Cardiac septum (tissue), 1 donor: ENCODE measurements at regions of chr19 and their contacts with region 1.

Region 1: GRCh38 chr19:35775298-35776110 is at the start of gene ARHGAP33:
- DNase-seq: peak; percentile 99
- total RNA-seq, gene ARHGAP33: 8.8 TPM

Region 2: DNA sequence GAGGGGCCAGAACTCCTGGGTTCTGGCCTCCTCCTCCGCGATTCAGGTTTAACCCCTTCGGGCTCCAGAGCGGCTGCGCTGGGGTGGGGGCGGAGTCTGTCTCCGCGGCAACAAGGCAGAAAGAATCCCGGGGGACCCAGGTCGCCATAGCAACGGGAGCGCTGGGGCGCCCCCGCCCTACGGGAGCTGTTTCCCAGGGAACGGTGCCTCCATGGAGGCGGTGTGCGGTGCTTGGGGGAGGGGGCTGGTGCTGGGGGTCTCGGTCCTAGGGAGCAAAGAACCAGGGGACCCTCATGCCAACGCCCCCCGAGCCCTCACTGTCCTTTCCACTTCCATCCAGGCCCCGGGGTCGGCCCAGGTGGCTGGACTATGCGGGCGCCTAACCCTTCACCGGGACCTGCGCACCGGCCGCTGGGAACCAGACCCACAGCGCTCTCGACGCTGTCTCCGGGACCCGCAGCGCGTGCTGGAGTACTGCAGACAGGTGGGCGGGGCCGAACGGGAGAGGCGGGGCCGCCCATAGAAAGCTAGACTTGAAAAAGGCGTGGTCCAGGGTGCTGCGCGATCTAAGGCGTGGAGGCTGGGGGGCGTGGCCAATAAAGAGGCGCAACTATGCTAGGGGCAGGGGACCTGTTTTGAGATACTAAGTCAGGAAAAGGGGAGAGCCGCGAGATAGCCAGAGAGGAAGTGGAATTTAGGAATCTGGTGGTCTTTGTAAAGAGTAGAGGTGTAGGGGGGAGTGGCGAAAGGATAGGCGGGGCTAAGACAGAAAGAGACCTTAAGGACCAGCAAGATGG is 94.0 kb after region 1 on chr19:
- intact Hi-C with region 1: loop called (anchors 10 kb)
- DNase-seq: no peak

Region 3: GRCh38 chr19:35935911-35936737 is 160.6 kb after region 1 on chr19 and contains the start of gene LRFN3:
- intact Hi-C with region 1: no loop called
- DNase-seq: peak; percentile 82
- total RNA-seq, gene LRFN3: 8.8 TPM